Activated T-helper 1 cell treated with anti-CD3 and anti-CD28 coated beads, Interleukin-12 subunit alpha, Interleukin-12 subunit beta, Interleukin-2, Interleukin-4 antibody, amounts not matched to agents 30 ng/mL and 10 ng/mL and 1 ng/mL, durations not matched to agents 14 hours and 24 hours and 36 hours (primary cell): ENCODE measurements at regions of chr2 and their contacts with region 1.

Region 1: GRCh38 chr2:68653538-68653982 is 10.2 kb downstream of the PROKR1 start:
- DNase-seq: peak; percentile 51
- H3K4me3 Mint-ChIP-seq: peak overlapping the region; percentile 8
- H3K27ac Mint-ChIP-seq: peak overlapping the region; percentile 64
- H3K4me1 Mint-ChIP-seq: peaks cover 47% of the 10 kb centered on the region
- H3K27me3 Mint-ChIP-seq: peaks cover 26% of the 10 kb centered on the region

Region 2: DNA sequence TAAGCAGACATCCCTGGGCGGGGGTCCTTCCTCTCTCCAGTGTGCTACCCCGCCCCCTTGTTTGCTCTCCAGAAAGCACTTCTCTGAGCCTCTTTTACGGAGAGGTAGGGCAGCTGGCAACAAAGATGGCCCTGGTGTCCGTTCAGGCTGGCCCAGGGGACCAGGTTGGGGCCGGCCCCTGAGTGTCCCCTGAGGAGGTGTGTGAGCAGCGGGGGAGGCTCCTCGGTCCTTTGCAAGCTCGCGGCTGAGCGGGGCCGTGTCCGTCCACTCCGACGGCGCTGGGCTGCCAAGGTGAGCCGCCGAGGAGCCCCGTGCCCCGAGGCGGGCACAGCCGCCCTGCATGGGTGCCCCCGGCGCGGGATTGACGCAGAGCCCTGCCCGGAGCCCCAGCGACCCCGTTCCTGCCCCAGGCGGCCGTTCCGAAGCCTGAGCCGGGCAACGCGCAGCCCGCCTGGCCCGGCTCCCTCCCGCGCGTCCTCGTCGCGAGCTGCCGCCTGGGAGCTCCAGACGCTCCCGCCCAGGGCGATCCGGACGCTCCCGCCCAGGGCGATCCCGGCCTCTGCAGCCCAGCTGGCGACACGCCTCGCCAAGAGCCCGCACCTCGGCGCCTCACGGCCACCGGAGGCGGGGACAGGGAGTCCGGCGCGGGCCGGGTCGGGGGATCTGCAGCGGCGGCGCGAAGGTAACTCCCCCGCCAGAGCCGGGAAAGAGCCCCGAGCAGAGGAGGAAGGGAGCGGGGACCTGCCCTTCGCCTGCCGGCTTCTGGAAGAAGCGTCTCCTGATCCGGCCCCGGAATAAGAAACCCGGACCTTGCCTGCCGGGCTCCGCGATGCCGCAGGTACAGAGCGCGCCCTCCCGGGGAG is 10.3 kb before region 1 on chr2 and contains the start of gene PROKR1:
- intact Hi-C with region 1: loop called (anchors 1 kb)
- DNase-seq: no peak
- H3K4me3 Mint-ChIP-seq: peak within 1 kb of the TSS; percentile 8
- H3K27ac Mint-ChIP-seq: no peak within 1 kb of the TSS
- H3K4me1 Mint-ChIP-seq: peaks cover 12% of the 10 kb centered on the region
- H3K27me3 Mint-ChIP-seq: peaks cover 57% of the 10 kb centered on the region
- total RNA-seq, gene PROKR1: not detected in 2 replicates

Region 3: GRCh38 chr2:68689553-68690537 is 36.3 kb after region 1 on chr2:
- intact Hi-C with region 1: loop called (anchors 1 kb)
- DNase-seq: no peak
- H3K4me3 Mint-ChIP-seq: peak overlapping the region; percentile 32
- H3K27ac Mint-ChIP-seq: peak overlapping the region; percentile 83
- H3K4me1 Mint-ChIP-seq: peaks cover 21% of the 10 kb centered on the region
- H3K27me3 Mint-ChIP-seq: peaks cover 7% of the 10 kb centered on the region

Region 4: DNA sequence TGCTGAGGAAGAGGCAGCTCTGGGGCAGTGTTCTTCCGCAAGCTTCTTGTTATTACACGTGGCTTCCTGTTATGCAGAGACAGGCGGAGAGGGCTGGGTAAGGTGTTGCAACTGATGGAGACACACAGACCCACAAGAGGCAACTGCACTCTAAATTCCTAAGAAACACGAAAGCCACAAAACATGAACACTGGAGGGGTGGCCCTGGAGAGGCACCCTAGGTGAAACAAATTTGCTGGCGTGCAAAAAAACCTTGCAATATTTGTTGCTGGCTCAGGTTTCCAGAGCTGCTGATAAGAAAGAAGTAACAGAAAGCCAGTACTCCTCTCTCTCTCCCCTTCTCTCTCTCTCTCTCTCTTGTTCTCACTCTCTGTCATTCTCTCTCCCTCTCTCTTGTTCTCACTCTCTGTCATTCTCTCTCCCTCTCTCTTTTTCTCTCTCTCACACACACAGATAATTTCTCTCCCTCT is 112.9 kb after region 1 on chr2:
- intact Hi-C with region 1: loop called (anchors 2 kb)
- DNase-seq: peak; percentile 75
- H3K4me3 Mint-ChIP-seq: peak overlapping the region; percentile 65
- H3K27ac Mint-ChIP-seq: peak overlapping the region; percentile 92
- H3K4me1 Mint-ChIP-seq: peaks cover 96% of the 10 kb centered on the region
- H3K27me3 Mint-ChIP-seq: no peaks in the 10 kb centered on the region

Region 5: DNA sequence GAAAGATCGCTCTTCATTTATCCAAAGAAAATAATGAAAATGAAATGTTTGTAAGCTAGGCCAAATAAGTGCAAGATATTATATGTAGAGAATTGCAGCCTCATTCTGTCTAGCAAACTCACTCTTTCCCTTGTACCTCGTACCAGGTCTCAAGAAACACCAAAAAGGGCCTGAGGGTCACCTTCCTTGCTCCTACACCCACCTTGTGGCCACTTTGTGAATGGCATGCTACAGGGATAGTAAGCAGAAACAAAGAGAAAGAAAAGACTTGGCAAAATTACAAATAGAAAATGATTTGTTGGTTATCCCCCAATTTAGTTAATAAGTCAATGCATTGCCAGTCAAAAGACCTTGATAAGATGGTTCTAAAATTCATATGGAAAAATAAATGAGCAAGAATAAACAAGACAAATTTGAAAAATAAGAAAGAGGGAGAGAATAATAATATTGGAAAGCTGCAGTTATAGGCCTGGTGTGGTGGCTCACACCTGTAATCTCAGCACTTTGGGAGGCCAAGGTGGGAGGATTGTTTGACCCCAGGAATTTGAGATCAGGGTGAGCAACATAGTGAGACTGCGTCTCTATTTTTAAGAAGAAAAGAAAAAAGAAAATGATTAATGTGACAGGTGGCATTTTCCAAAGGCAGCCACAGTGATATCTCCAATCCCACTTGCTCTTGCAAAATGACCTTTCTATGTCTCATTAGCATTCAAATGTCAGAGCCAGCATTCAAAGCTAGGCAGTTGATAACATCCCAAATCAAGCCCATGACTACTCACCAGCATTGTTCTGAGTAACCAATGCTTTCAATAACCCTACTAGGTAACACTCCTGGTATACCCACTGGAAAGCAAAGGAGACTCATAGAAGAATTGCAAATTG is 256.5 kb after region 1 on chr2:
- intact Hi-C with region 1: loop called (anchors 2 kb)
- DNase-seq: peak; percentile 56
- H3K4me3 Mint-ChIP-seq: peak overlapping the region; percentile 12
- H3K27ac Mint-ChIP-seq: peak overlapping the region; percentile 70
- H3K4me1 Mint-ChIP-seq: peaks cover 33% of the 10 kb centered on the region
- H3K27me3 Mint-ChIP-seq: no peaks in the 10 kb centered on the region